ENCODE measurements at regions of chr2 and their contacts with region 1.

Region 1: GRCh38 chr2:55617175-55618024 is at the start of gene PPP4R3B:
- DNase-seq: peak; percentile 99
- ATAC-seq: peak; percentile 78
- H3K4me3 ChIP-seq: peak within 1 kb of the TSS; percentile 94
- H3K27ac ChIP-seq: peak within 1 kb of the TSS; percentile 91
- H3K4me1 ChIP-seq: peaks cover 24% of the 10 kb centered on the region
- H3K27me3 ChIP-seq: no peaks in the 10 kb centered on the region
- CTCF ChIP-seq: peak; percentile 18; the same call in 1 of the 2 replicates
- total RNA-seq, gene PPP4R3B: 38.4 and 50.7 TPM in 2 replicates

Region 2: GRCh38 chr2:55419679-55420438 is 197.5 kb before region 1 on chr2 and contains the start of gene CCDC88A:
- CTCF ChIA-PET with region 1: no interaction called
- POLR2A ChIA-PET with region 1: no interaction called
- intact Hi-C with region 1: no loop called
- DNase-seq: peak; percentile 94
- ATAC-seq: peak; percentile 91
- H3K4me3 ChIP-seq: peak within 1 kb of the TSS; percentile 82
- H3K27ac ChIP-seq: no peak within 1 kb of the TSS
- H3K4me1 ChIP-seq: peaks cover 23% of the 10 kb centered on the region
- H3K27me3 ChIP-seq: no peaks in the 10 kb centered on the region
- CTCF ChIP-seq: 0 out of 2 replicates have a peak, but pooled peaks have one; percentile 16
- total RNA-seq, gene CCDC88A: 21.6 and 28.7 TPM in 2 replicates

Region 3: GRCh38 chr2:55550368-55551102 is 66.9 kb before region 1 on chr2:
- CTCF ChIA-PET with region 1: no interaction called
- POLR2A ChIA-PET with region 1: no interaction called
- intact Hi-C with region 1: loop called (anchors 1 kb)
- DNase-seq: peak; percentile 82
- ATAC-seq: peak; percentile 92
- H3K4me3 ChIP-seq: no peak overlapping the region
- H3K27ac ChIP-seq: no peak overlapping the region; the same call in 1 of the 2 replicates
- H3K4me1 ChIP-seq: peaks cover 8% of the 10 kb centered on the region
- H3K27me3 ChIP-seq: no peaks in the 10 kb centered on the region
- CTCF ChIP-seq: no peak

Region 4: DNA sequence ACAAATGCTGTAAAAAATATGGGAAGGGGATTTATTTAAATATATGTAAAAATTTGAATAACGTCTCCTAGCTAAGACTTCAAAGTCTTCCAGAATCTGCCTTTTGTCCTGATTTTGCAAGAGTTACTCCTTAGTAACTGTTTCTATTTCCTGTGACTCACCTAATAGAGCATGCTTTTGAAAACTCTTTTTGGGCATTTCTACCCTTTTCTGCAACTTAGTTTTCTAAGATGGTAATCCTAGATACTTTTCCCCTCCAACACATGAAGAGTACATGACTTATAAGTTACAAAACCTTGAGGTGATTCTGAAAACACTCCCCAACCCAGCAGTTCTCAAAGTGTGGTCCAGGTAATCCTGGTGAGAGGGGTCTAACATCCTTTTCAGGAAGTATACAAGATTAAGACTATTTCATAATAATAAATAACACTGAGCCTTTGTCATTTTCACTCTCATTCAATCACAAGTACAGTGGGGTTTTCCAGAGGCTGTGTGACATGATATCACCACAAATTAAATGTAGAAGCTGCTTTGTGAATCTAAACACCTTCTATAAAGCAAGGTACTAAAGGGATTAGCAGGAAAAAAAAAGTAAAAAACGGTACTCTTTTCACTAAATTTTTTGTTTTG is 31.8 kb before region 1 on chr2:
- CTCF ChIA-PET with region 1: no interaction called
- POLR2A ChIA-PET with region 1: no interaction called
- intact Hi-C with region 1: loop called (anchors 2 kb)
- DNase-seq: peak; percentile 47
- ATAC-seq: peak; percentile 88
- H3K4me3 ChIP-seq: peak overlapping the region; percentile 41
- H3K27ac ChIP-seq: peak overlapping the region; percentile 89
- H3K4me1 ChIP-seq: peaks cover 36% of the 10 kb centered on the region
- H3K27me3 ChIP-seq: no peaks in the 10 kb centered on the region
- CTCF ChIP-seq: no peak